Naive thymus-derived CD4-positive, alpha-beta T cell (primary cell): ENCODE measurements at regions of chr14 and their contacts with region 1.

Region 1: DNA sequence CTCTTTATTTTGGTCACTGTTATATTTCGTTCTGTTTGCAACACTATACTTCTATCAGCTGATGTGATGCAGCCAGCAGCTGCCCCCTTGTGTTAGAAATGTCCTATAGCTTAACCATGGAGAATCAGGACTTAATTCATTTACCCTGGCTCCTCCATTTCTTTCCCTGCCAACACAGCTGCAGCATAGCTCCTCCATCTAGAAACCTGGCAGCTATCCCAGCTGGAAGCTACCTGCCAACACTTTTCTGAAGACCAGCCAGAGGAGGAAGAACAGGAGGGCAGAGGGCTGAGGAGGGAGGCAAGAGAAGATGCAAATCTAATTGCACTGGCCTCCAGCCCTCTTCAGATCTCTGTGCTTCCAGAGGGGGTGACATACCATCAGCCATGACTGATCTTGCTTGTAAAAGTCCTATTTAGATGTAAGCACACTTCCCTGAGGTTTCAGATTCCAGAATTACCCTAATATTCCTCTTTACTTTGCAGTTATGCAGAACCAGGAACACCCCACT is 156.8 kb upstream of the TMEM260 start:
- DNase-seq: peak in 6 of 9 donors; percentile 13 to 39 (median 18)
- ATAC-seq: peak; percentile 38
- H3K4me3 ChIP-seq: no peak overlapping the region
- H3K4me3 Mint-ChIP-seq: no peak overlapping the region
- H3K27ac ChIP-seq: no peak overlapping the region
- H3K27ac Mint-ChIP-seq: no peak overlapping the region
- H3K4me1 ChIP-seq: no peaks in the 10 kb centered on the region
- H3K4me1 Mint-ChIP-seq: peaks cover 0 to 4% (median 0%) of the 10 kb centered on the region in 7 donors
- H3K27me3 ChIP-seq: no peaks in the 10 kb centered on the region
- H3K27me3 Mint-ChIP-seq: peaks cover 0 to 24% (median 4%) of the 10 kb centered on the region in 5 donors

Region 2: GRCh38 chr14:55212634-55213033 is 1210.1 kb before region 1 on chr14:
- CTCF ChIA-PET with region 1: no interaction called
- POLR2A ChIA-PET with region 1: no interaction called
- intact Hi-C with region 1: loop called in 1 of 2 experiments (anchors 1 kb)
- DNase-seq: no peak
- ATAC-seq: no peak
- H3K4me3 ChIP-seq: no peak overlapping the region
- H3K4me3 Mint-ChIP-seq: no peak overlapping the region
- H3K27ac ChIP-seq: no peak overlapping the region
- H3K27ac Mint-ChIP-seq: no peak overlapping the region
- H3K4me1 ChIP-seq: no peaks in the 10 kb centered on the region
- H3K4me1 Mint-ChIP-seq: peaks cover 0 to 5% (median 5%) of the 10 kb centered on the region in 7 donors
- H3K27me3 ChIP-seq: no peaks in the 10 kb centered on the region
- H3K27me3 Mint-ChIP-seq: peaks cover 0 to 11% (median 0%) of the 10 kb centered on the region in 5 donors

Region 3: GRCh38 chr14:55707365-55707804 is 715.4 kb before region 1 on chr14:
- CTCF ChIA-PET with region 1: no interaction called
- POLR2A ChIA-PET with region 1: no interaction called
- intact Hi-C with region 1: loop called (anchors 1 kb)
- DNase-seq: peak in 4 of 9 donors; percentile 2 to 31 (median 17)
- ATAC-seq: no peak
- H3K4me3 ChIP-seq: no peak overlapping the region
- H3K4me3 Mint-ChIP-seq: no peak overlapping the region
- H3K27ac ChIP-seq: no peak overlapping the region
- H3K27ac Mint-ChIP-seq: no peak overlapping the region
- H3K4me1 ChIP-seq: no peaks in the 10 kb centered on the region
- H3K4me1 Mint-ChIP-seq: no peaks in the 10 kb centered on the region
- H3K27me3 ChIP-seq: no peaks in the 10 kb centered on the region
- H3K27me3 Mint-ChIP-seq: peaks cover 0 to 2% (median 0%) of the 10 kb centered on the region in 5 donors

Region 4: DNA sequence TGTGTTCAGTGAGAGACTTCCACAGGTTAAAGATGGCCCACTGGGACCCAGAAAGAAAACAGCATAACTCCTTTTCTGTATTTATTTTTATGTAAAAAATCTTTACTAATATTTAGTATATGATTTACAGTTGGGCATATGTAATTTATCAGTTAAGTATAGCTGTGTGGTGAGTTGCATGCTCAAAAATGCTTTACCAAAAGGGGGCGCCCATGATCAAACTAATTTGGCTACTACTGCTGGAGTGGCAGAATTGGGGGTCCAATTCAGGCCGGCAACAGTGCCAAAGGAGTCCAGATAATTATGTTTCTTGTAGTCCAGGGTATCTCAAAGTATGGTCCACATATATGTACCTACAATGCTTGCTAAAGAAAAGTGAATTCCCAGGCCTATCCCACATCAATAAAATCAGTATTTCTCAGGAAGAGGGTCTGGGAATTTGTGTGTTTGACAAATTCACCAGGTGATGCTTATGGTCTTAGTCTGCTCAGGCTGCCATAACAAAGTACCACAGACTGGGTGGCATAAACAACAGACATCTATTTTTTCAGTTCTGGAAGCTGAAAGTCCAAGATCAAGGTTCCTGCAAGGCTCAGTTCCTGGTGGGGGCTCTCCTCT is 690.8 kb before region 1 on chr14:
- CTCF ChIA-PET with region 1: no interaction called
- POLR2A ChIA-PET with region 1: no interaction called
- intact Hi-C with region 1: loop called (anchors 1 kb)
- DNase-seq: peak; percentile 8 to 58 (median 33)
- ATAC-seq: peak; percentile 44
- H3K4me3 ChIP-seq: no peak overlapping the region
- H3K4me3 Mint-ChIP-seq: no peak overlapping the region
- H3K27ac ChIP-seq: no peak overlapping the region
- H3K27ac Mint-ChIP-seq: no peak overlapping the region
- H3K4me1 ChIP-seq: no peaks in the 10 kb centered on the region
- H3K4me1 Mint-ChIP-seq: peaks cover 0 to 19% (median 0%) of the 10 kb centered on the region in 7 donors
- H3K27me3 ChIP-seq: no peaks in the 10 kb centered on the region
- H3K27me3 Mint-ChIP-seq: peaks cover 0 to 16% (median 4%) of the 10 kb centered on the region in 5 donors

Region 5: GRCh38 chr14:55864890-55865655 is 557.7 kb before region 1 on chr14:
- CTCF ChIA-PET with region 1: no interaction called
- POLR2A ChIA-PET with region 1: no interaction called
- intact Hi-C with region 1: loop called in 1 of 2 experiments (anchors 10 kb)
- DNase-seq: no peak
- ATAC-seq: no peak
- H3K4me3 ChIP-seq: no peak overlapping the region
- H3K4me3 Mint-ChIP-seq: no peak overlapping the region
- H3K27ac ChIP-seq: no peak overlapping the region
- H3K27ac Mint-ChIP-seq: no peak overlapping the region
- H3K4me1 ChIP-seq: no peaks in the 10 kb centered on the region
- H3K4me1 Mint-ChIP-seq: peaks cover 0 to 6% (median 0%) of the 10 kb centered on the region in 7 donors
- H3K27me3 ChIP-seq: no peaks in the 10 kb centered on the region
- H3K27me3 Mint-ChIP-seq: peaks cover 5 to 25% (median 8%) of the 10 kb centered on the region in 5 donors

Region 6: GRCh38 chr14:56081139-56081538 is 341.6 kb before region 1 on chr14:
- CTCF ChIA-PET with region 1: no interaction called
- POLR2A ChIA-PET with region 1: no interaction called
- intact Hi-C with region 1: no loop called
- DNase-seq: no peak
- ATAC-seq: no peak
- H3K4me3 ChIP-seq: no peak overlapping the region
- H3K4me3 Mint-ChIP-seq: no peak overlapping the region
- H3K27ac ChIP-seq: no peak overlapping the region
- H3K27ac Mint-ChIP-seq: no peak overlapping the region
- H3K4me1 ChIP-seq: no peaks in the 10 kb centered on the region
- H3K4me1 Mint-ChIP-seq: no peaks in the 10 kb centered on the region
- H3K27me3 ChIP-seq: no peaks in the 10 kb centered on the region
- H3K27me3 Mint-ChIP-seq: peaks cover 12 to 48% (median 36%) of the 10 kb centered on the region in 5 donors